ENCODE measurements at regions of chr21 and their contacts with region 1.

Region 1: DNA sequence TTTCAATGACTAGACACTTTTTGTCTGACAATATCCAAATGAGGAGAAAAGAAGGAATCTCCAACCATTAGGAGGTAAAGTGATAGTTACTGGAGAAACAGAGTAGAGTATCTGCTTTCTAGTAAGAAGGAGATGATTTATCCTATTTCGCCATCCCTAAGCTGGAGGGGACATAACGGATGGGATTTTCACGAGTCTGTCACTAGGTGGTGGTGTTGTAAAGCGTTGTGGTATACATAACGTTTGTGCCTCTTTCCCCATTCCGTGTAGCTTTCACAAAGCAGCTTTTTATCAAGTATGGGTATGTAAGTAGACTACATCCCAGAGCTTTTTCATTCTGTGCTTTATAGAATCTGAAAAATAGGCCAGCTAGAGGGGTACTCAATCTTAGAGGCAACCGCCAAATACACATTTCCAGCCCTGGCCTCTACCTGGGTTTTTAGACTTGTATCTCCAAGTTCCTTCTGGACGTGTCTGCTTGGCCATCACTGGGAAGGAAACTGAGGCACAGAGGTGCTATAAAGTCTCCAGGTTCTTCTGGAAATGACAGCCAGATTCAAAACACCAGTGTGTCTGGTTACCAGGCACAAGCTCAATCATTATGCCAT is 33.3 kb upstream of the FAM3B start:
- DNase-seq: peak in 1 of 2 donors; percentile 70
- H3K4me3 ChIP-seq: no peak overlapping the region
- H3K27ac ChIP-seq: no peak overlapping the region
- H3K4me1 ChIP-seq: no peaks in the 10 kb centered on the region
- H3K27me3 ChIP-seq: no peaks in the 10 kb centered on the region
- CTCF ChIP-seq: peak; percentile 67 to 82 (median 76)

Region 2: DNA sequence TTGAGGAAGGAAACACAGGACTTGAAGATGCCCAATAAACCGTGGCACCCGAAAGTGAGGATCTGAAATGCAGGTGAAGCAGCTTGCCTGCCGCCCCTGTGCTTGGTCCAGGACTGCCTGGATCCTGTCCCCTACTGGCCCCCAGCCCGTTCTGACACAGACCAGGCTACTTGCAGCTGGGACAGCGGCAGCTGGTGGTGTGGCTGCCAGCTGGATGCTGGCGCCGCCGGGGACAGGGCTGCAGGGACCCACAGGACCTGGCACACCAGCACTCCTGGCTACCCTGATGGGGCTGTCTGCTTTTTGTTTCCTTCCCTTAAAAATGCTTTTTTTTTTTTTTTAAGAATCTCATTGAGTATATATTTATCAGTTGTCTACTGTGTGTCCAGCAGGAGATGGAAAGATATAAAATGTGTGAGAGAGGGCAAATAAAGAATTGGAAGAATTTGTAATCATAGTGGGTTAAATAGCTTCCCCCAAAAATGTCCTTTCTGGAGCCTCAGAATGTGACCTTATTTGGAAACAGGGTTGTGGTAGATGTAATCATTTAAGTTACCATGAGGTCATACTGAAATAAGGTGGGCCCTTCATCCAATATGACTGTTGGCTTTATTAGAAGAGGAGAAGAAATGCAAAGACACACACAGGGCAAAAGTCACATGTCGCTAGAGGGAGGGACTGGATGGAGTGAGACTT is 602.0 kb before region 1 on chr21:
- intact Hi-C with region 1: no loop called
- DNase-seq: no peak
- H3K4me3 ChIP-seq: no peak overlapping the region
- H3K27ac ChIP-seq: no peak overlapping the region
- H3K4me1 ChIP-seq: no peaks in the 10 kb centered on the region
- H3K27me3 ChIP-seq: no peaks in the 10 kb centered on the region
- CTCF ChIP-seq: no peak

Region 3: GRCh38 chr21:41460578-41461527 is 177.5 kb after region 1 on chr21:
- intact Hi-C with region 1: loop called (anchors 1 kb)
- DNase-seq: peak; percentile 26 to 83
- H3K4me3 ChIP-seq: no peak overlapping the region
- H3K27ac ChIP-seq: no peak overlapping the region
- H3K4me1 ChIP-seq: no peaks in the 10 kb centered on the region
- H3K27me3 ChIP-seq: no peaks in the 10 kb centered on the region
- CTCF ChIP-seq: peak; percentile 63 to 78 (median 75)

Region 4: DNA sequence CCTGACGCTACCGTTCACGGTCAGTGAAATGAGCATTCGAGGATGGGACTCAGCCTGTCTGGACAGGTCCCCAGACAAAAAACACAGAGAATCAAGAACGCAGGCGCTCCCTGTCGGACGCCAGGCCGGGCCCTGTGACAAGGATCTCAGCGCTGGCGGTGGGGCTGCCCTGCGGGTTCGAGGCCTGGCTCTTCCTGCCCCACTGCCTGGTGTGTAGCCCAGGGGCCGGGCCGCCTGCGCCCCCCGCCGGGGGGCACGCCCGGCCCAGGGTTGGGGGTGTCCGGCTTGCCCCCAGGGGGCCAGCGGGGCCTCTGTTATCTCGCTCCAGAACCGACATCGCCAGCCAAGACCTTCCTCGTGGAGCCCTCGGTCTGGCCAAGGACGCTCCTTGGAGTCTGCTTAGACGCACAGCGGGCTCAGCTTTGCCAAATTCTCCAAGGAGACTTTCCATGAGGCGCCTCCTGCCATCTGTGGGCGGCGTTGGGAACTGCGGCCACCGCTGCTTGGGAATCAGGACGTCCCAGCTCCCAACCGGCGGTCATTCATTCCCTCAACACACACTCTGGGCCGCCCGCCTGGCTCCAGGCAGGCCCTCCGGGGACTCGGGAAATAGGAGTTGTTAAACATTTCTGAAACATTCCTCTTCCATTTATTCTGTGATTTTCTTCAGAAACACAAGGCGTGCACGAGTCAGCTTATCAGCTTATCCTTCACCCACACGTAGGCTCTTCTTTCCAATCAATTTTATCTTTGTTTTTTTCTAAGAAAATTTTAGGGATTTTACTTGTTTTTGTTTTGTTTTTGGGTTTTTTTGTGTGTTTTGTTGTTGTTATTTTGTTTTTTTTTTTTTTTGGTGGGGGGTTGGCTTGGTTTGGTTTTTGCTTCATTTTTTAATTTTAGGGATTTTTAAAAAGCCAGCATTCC is 494.9 kb after region 1 on chr21:
- intact Hi-C with region 1: loop called (anchors 10 kb)
- DNase-seq: peak; percentile 59 to 95
- H3K4me3 ChIP-seq: peak overlapping the region; percentile 37 to 51
- H3K27ac ChIP-seq: peak overlapping the region; percentile 64 to 79
- H3K4me1 ChIP-seq: peaks cover 0 to 3% of the 10 kb centered on the region in 2 donors
- H3K27me3 ChIP-seq: no peaks in the 10 kb centered on the region
- CTCF ChIP-seq: peak; percentile 89 to 97 (median 95)

Region 5: DNA sequence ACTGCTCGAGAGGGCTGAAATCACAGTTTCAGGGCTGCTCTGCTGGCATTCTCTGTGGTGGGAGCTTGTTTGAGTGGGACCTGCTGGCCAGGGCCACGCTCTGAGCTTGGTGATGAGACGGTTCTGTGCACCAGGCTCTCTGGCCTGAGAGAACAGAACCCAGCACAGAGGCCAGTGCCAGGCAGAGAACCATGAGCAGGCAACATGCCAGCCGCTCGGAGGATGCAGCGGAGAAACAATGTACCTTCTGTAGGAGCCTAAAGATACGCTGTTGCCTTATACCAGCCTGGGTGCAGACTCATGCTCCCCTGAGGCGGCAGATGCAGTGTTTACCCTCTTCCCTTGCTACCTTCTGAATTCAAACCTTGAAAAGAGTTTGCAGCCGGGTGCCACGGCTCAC is 660.5 kb after region 1 on chr21:
- intact Hi-C with region 1: no loop called
- DNase-seq: no peak
- H3K4me3 ChIP-seq: no peak overlapping the region
- H3K27ac ChIP-seq: no peak overlapping the region
- H3K4me1 ChIP-seq: peaks cover 6 to 16% of the 10 kb centered on the region in 2 donors
- H3K27me3 ChIP-seq: no peaks in the 10 kb centered on the region
- CTCF ChIP-seq: no peak

Measured in ascending aorta (tissue), 2 donors.